Mucosa of descending colon (tissue), 3 donors: ENCODE measurements at regions of chr12 and their contacts with region 1.

Region 1: GRCh38 chr12:66901138-66901932 is 222.5 kb upstream of the GRIP1 start:
- DNase-seq: peak in 1 of 3 donors; percentile 16
- ATAC-seq: peak; percentile 83
- H3K4me3 ChIP-seq: no peak overlapping the region
- H3K4me1 ChIP-seq: no peaks in the 10 kb centered on the region
- CTCF ChIP-seq: no peak

Region 2: GRCh38 chr12:66964629-66965028 is 63.3 kb after region 1 on chr12:
- intact Hi-C with region 1: no loop called
- DNase-seq: no peak
- ATAC-seq: peak; percentile 35
- H3K4me3 ChIP-seq: no peak overlapping the region
- H3K4me1 ChIP-seq: no peaks in the 10 kb centered on the region
- CTCF ChIP-seq: no peak

Region 3: DNA sequence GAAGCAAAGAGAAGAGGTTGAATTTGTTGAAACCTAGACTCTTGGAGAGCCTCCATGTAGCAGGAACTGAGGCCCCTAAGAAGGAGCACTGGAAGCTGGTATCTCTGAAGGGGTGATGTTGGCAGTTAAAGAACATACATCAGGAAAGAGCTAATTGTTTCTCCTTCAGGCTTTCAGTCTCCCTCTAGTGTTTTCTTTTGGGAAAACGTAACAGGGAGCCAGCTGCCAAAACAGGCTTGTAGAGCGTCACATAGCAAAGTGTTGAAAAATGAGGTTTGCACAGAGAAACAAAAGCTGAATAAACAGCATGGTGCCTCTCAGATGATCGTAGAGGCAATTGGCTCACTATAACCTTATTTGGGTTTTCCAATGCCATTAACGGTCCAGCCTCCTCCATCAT is 321.0 kb after region 1 on chr12:
- intact Hi-C with region 1: loop called in 1 of 2 experiments (anchors 10 kb)
- DNase-seq: no peak
- ATAC-seq: no peak
- H3K4me3 ChIP-seq: no peak overlapping the region
- H3K4me1 ChIP-seq: no peaks in the 10 kb centered on the region
- CTCF ChIP-seq: no peak